Activated T-helper 1 cell treated with anti-CD3 and anti-CD28 coated beads, Interleukin-12 subunit alpha, Interleukin-12 subunit beta, Interleukin-2, Interleukin-4 antibody, amounts not matched to agents 30 ng/mL and 10 ng/mL and 1 ng/mL, durations not matched to agents 14 hours and 24 hours and 36 hours (primary cell): ENCODE measurements at regions of chr5 and their contacts with region 1.

Region 1: GRCh38 chr5:10563945-10564837 is at the start of gene ANKRD33B:
- DNase-seq: peak; percentile 82
- H3K4me3 Mint-ChIP-seq: peak within 1 kb of the TSS; percentile 95
- H3K27ac Mint-ChIP-seq: peak within 1 kb of the TSS; percentile 89
- H3K4me1 Mint-ChIP-seq: peaks cover 54% of the 10 kb centered on the region
- H3K27me3 Mint-ChIP-seq: peaks cover 23% of the 10 kb centered on the region
- total RNA-seq, gene ANKRD33B: 21.4 and 21.5 TPM in 2 replicates

Region 2: GRCh38 chr5:10249948-10250803 is 314.0 kb before region 1 on chr5 and contains the start of gene CCT5:
- intact Hi-C with region 1: loop called (anchors 1 kb)
- DNase-seq: peak; percentile 89
- H3K4me3 Mint-ChIP-seq: peak within 1 kb of the TSS; percentile 91
- H3K27ac Mint-ChIP-seq: peak within 1 kb of the TSS; percentile 100
- H3K4me1 Mint-ChIP-seq: peaks cover 53% of the 10 kb centered on the region
- H3K27me3 Mint-ChIP-seq: no peaks in the 10 kb centered on the region
- total RNA-seq, gene CCT5: 511 and 512 TPM in 2 replicates

Region 3: GRCh38 chr5:10577371-10578292 is 13.4 kb after region 1 on chr5:
- intact Hi-C with region 1: loop called (anchors 1 kb)
- DNase-seq: no peak
- H3K4me3 Mint-ChIP-seq: no peak overlapping the region
- H3K27ac Mint-ChIP-seq: peak overlapping the region; percentile 79
- H3K4me1 Mint-ChIP-seq: peaks cover 65% of the 10 kb centered on the region
- H3K27me3 Mint-ChIP-seq: no peaks in the 10 kb centered on the region

Region 4: DNA sequence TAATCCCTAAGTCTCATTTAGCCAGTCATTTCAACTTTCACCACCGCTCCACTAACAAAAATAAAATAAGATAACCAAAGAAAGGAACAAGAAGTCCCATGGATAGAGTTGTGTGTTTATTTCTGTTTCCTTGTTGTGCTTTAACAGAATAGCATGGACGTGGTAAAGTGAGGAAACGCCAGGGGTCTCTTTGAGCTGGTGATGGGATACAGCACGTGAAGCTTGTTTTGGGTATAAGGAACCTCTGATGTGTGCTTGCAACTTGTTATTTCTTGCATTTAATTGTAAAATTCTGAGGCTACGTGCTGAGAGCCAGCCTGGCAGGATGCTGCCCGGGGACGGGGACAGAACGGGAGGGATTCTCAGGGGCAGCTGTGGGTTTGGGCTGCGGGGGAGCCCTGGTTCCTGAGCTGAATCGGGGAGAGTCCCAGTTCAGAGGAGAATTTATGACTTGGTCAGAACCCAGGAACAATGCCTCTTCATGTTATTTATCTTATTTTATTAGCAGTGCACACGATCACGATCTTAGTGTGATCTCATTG is 63.0 kb after region 1 on chr5:
- intact Hi-C with region 1: loop called (anchors 1 kb)
- DNase-seq: no peak
- H3K4me3 Mint-ChIP-seq: peak overlapping the region; percentile 77
- H3K27ac Mint-ChIP-seq: peak overlapping the region; percentile 90
- H3K4me1 Mint-ChIP-seq: peaks cover 50% of the 10 kb centered on the region
- H3K27me3 Mint-ChIP-seq: peaks cover 3% of the 10 kb centered on the region

Region 5: DNA sequence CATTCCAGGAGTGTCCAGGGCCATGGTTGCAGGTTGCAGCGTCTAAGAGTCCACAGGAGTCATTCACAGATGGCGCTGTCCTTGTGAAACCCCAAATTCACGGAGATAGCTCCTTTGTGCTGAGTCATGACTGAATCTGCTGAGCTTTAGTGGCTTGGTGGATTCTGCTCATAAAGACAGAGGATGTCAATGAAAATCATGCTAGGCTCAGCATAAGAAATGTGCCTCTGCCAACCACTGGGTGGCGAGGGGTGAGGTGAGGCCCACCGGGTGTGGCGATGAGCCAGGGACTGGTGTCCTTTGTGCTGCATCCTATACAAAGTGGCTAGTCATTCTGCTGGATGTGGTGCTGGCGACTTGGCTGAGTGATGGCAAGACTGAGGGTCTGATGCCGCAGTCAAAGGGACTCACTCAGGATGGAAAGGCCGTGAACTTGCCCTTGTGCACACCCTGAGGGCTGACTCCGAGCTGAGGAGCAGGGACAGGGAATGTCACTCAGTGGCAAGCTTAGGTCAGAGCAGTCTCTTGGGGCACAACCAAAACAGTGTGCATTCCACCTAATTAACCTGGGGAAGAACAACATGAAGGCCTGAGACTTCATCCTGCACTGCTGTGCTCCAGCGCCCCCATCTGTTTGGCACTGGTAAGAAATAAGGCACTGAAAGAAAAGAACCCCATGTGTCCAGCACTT is 125.3 kb after region 1 on chr5:
- intact Hi-C with region 1: loop called (anchors 5 kb)
- DNase-seq: no peak
- H3K4me3 Mint-ChIP-seq: no peak overlapping the region
- H3K27ac Mint-ChIP-seq: no peak overlapping the region
- H3K4me1 Mint-ChIP-seq: peaks cover 16% of the 10 kb centered on the region
- H3K27me3 Mint-ChIP-seq: no peaks in the 10 kb centered on the region

Region 6: GRCh38 chr5:11384441-11385250 is 820.5 kb after region 1 on chr5:
- intact Hi-C with region 1: no loop called
- DNase-seq: no peak
- H3K4me3 Mint-ChIP-seq: no peak overlapping the region
- H3K27ac Mint-ChIP-seq: no peak overlapping the region
- H3K4me1 Mint-ChIP-seq: no peaks in the 10 kb centered on the region
- H3K27me3 Mint-ChIP-seq: peaks cover 33% of the 10 kb centered on the region

Region 7: DNA sequence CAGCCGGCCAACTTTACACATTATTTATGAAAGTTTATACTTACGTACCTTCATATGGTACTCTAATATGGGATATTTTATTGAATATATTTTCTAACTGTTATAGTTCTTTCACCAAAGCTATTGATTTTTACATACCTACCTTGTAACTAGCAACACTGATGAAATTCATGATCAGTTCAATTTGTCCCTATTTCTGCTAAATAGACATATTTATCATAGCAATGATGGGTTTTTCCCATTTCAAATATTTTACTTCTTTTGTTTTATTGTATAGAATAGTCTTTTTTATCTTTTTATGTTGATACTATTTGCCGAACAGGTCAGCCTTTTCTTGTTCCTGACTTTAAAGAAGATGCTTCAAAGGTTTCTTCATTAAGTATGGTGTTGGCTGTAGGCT is 1399.0 kb after region 1 on chr5:
- intact Hi-C with region 1: no loop called
- DNase-seq: no peak
- H3K4me3 Mint-ChIP-seq: no peak overlapping the region
- H3K27ac Mint-ChIP-seq: no peak overlapping the region
- H3K4me1 Mint-ChIP-seq: no peaks in the 10 kb centered on the region
- H3K27me3 Mint-ChIP-seq: no peaks in the 10 kb centered on the region